Activated CD8-positive, alpha-beta T cell treated with anti-CD3 and anti-CD28 coated beads for 36 hours (primary cell): ENCODE measurements at regions of chr12 and their contacts with region 1.

Region 1: GRCh38 chr12:3727877-3728632 is 24.9 kb downstream of the CRACR2A start:
- DNase-seq: peak; percentile 67
- ATAC-seq: peak; percentile 86
- H3K4me3 Mint-ChIP-seq: peak overlapping the region; percentile 28
- H3K27ac Mint-ChIP-seq: peak overlapping the region; percentile 85
- H3K4me1 Mint-ChIP-seq: peaks cover 36% of the 10 kb centered on the region
- H3K27me3 Mint-ChIP-seq: no peaks in the 10 kb centered on the region
- CTCF ChIP-seq: no peak

Region 2: GRCh38 chr12:3743803-3744202 is 15.7 kb after region 1 on chr12:
- CTCF ChIA-PET with region 1: interaction called, 6 read pairs
- POLR2A ChIA-PET with region 1: interaction called, 11 read pairs
- intact Hi-C with region 1: no loop called
- DNase-seq: peak; percentile 75
- ATAC-seq: peak; percentile 71
- H3K4me3 Mint-ChIP-seq: no peak overlapping the region
- H3K27ac Mint-ChIP-seq: peak overlapping the region; percentile 79
- H3K4me1 Mint-ChIP-seq: peaks cover 49% of the 10 kb centered on the region
- H3K27me3 Mint-ChIP-seq: no peaks in the 10 kb centered on the region
- CTCF ChIP-seq: no peak

Region 3: GRCh38 chr12:3752741-3753486 is 24.9 kb after region 1 on chr12 and contains the start of gene CRACR2A:
- CTCF ChIA-PET with region 1: interaction called, 3 read pairs
- POLR2A ChIA-PET with region 1: interaction called, 10 read pairs
- intact Hi-C with region 1: no loop called
- DNase-seq: peak; percentile 90
- ATAC-seq: peak; percentile 86
- H3K4me3 Mint-ChIP-seq: peak within 1 kb of the TSS; percentile 80
- H3K27ac Mint-ChIP-seq: peak within 1 kb of the TSS; percentile 90
- H3K4me1 Mint-ChIP-seq: peaks cover 46% of the 10 kb centered on the region
- H3K27me3 Mint-ChIP-seq: no peaks in the 10 kb centered on the region
- CTCF ChIP-seq: peak; percentile 79
- total RNA-seq, gene CRACR2A: 21.2 to 24.7 TPM

Region 4: GRCh38 chr12:3770886-3771285 is 42.8 kb after region 1 on chr12:
- CTCF ChIA-PET with region 1: no interaction called
- POLR2A ChIA-PET with region 1: no interaction called
- intact Hi-C with region 1: no loop called
- DNase-seq: no peak
- ATAC-seq: no peak
- H3K4me3 Mint-ChIP-seq: no peak overlapping the region
- H3K27ac Mint-ChIP-seq: no peak overlapping the region
- H3K4me1 Mint-ChIP-seq: peaks cover 9% of the 10 kb centered on the region
- H3K27me3 Mint-ChIP-seq: no peaks in the 10 kb centered on the region
- CTCF ChIP-seq: no peak